Activated T-helper 1 cell treated with anti-CD3 and anti-CD28 coated beads, Interleukin-12 subunit alpha, Interleukin-12 subunit beta, Interleukin-2, Interleukin-4 antibody, amounts not matched to agents 30 ng/mL and 10 ng/mL and 1 ng/mL, durations not matched to agents 14 hours and 24 hours and 36 hours (primary cell): ENCODE measurements at regions of chr5 and their contacts with region 1.

Region 1: DNA sequence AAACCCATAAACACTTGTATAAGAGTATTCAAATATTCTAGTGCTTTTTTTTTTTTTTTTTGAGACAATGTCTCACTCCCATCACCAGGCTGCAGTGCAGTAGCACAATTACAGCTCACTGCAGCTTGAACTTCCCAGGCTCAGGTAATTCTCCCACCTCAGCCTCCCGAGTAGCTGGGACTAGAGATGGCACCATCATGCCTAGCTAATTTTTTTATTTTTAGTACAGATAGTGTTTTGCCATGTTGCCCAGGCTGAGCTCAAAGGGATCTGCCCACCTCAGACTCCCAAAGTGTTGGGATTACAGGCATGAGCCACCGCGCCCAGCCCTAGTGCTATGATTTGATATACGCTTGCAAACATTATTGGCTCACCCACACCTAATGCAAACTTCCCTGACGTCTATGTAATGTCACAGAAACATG is 11.8 kb downstream of the IL6ST start:
- DNase-seq: no peak
- H3K4me3 Mint-ChIP-seq: peak overlapping the region; percentile 56
- H3K27ac Mint-ChIP-seq: peak overlapping the region; percentile 51
- H3K4me1 Mint-ChIP-seq: peaks cover 81% of the 10 kb centered on the region
- H3K27me3 Mint-ChIP-seq: no peaks in the 10 kb centered on the region

Region 2: DNA sequence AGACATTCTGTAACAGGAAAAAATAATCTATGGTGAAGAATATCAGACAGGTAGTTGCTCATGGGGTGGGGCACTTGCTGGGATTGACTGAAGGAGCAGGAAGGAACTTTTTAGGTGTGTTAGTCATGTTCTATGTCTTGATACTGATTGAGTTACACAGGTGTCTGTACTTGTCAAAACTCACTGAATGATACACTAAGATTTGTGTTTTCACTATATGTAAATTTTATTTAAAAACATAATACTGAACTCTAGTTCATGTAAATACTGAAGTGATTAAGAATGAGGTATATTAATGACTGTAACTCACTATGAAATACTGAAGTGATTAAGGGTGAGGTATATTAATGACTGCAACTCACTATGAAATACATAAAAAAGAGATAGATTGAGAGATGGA is 16.7 kb before region 1 on chr5:
- intact Hi-C with region 1: no loop called
- DNase-seq: no peak
- H3K4me3 Mint-ChIP-seq: no peak overlapping the region
- H3K27ac Mint-ChIP-seq: peak overlapping the region; percentile 67
- H3K4me1 Mint-ChIP-seq: peaks cover 49% of the 10 kb centered on the region
- H3K27me3 Mint-ChIP-seq: no peaks in the 10 kb centered on the region

Region 3: GRCh38 chr5:56012281-56012963 is 29.5 kb after region 1 on chr5:
- intact Hi-C with region 1: loop called (anchors 1 kb)
- DNase-seq: peak; percentile 21
- H3K4me3 Mint-ChIP-seq: peak overlapping the region; percentile 0
- H3K27ac Mint-ChIP-seq: peak overlapping the region; percentile 12
- H3K4me1 Mint-ChIP-seq: peaks cover 32% of the 10 kb centered on the region
- H3K27me3 Mint-ChIP-seq: no peaks in the 10 kb centered on the region

Region 4: GRCh38 chr5:56026863-56027300 is 43.9 kb after region 1 on chr5:
- intact Hi-C with region 1: loop called (anchors 2 kb)
- DNase-seq: no peak
- H3K4me3 Mint-ChIP-seq: no peak overlapping the region
- H3K27ac Mint-ChIP-seq: no peak overlapping the region
- H3K4me1 Mint-ChIP-seq: peaks cover 23% of the 10 kb centered on the region
- H3K27me3 Mint-ChIP-seq: peaks cover 32% of the 10 kb centered on the region

Region 5: DNA sequence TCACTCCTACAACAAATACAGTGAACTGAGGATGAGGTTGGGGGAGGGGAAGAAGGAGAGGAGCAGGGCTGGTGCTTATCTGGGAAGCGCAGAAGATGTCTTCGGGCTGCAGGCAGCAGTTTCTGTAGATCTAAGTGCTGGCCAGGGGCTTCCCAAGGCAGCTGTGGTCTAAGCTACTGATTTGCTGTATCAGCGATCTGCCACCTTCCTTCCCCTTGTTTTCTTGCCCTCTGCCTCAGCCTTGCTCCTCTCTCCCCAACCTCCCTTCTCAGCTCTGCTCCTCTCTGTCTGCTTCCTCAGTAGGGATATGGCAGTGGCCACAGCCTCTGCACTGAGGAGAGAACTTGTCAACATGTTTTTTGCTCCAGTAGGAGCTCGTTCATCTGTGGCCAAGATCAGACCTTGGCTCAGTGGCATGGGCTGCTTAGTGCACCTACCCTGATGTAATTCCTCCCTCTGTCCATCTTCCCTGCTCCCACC is 54.6 kb after region 1 on chr5:
- intact Hi-C with region 1: no loop called
- DNase-seq: no peak
- H3K4me3 Mint-ChIP-seq: no peak overlapping the region
- H3K27ac Mint-ChIP-seq: no peak overlapping the region
- H3K4me1 Mint-ChIP-seq: peaks cover 8% of the 10 kb centered on the region
- H3K27me3 Mint-ChIP-seq: peaks cover 19% of the 10 kb centered on the region

Region 6: DNA sequence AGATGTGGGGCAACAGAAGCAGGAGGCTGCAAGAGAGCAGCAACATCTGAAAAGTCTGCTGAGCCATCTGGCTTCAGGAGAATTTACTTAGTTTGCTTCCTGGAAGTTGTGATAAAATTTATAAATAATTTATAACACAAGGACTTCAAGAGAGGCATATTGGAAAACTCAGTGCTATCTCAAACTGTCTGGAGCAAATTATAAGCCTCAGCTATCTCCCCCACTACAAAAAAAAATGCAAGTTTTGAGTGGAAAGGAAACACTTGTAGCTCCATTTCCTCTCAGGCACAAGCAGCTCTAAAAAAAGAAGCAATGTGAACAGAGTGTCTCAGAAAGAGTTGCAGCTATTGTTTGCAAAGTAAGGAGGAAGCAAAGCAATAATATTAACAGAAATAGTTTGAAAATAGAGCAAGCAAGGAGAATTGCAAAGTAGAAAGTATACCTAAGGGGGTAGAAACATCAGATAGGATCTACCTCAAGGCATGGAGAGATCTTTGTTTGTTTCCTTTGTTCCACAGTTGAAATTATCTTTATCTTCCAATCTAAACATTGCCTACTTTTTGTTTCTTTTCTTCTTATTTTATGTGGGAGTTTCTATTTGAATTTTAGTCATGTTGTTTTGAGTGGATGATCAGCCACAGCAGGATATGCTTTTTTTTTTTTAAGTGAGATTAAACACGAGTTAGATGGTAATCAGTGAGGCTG is 67.7 kb after region 1 on chr5:
- intact Hi-C with region 1: loop called (anchors 1 kb)
- DNase-seq: no peak
- H3K4me3 Mint-ChIP-seq: peak overlapping the region; percentile 40
- H3K27ac Mint-ChIP-seq: peak overlapping the region; percentile 54
- H3K4me1 Mint-ChIP-seq: peaks cover 32% of the 10 kb centered on the region
- H3K27me3 Mint-ChIP-seq: peaks cover 6% of the 10 kb centered on the region

Region 7: GRCh38 chr5:56095579-56096102 is 112.7 kb after region 1 on chr5:
- intact Hi-C with region 1: no loop called
- DNase-seq: no peak
- H3K4me3 Mint-ChIP-seq: peak overlapping the region; percentile 50
- H3K27ac Mint-ChIP-seq: peak overlapping the region; percentile 87
- H3K4me1 Mint-ChIP-seq: peaks cover 83% of the 10 kb centered on the region
- H3K27me3 Mint-ChIP-seq: no peaks in the 10 kb centered on the region

Region 8: DNA sequence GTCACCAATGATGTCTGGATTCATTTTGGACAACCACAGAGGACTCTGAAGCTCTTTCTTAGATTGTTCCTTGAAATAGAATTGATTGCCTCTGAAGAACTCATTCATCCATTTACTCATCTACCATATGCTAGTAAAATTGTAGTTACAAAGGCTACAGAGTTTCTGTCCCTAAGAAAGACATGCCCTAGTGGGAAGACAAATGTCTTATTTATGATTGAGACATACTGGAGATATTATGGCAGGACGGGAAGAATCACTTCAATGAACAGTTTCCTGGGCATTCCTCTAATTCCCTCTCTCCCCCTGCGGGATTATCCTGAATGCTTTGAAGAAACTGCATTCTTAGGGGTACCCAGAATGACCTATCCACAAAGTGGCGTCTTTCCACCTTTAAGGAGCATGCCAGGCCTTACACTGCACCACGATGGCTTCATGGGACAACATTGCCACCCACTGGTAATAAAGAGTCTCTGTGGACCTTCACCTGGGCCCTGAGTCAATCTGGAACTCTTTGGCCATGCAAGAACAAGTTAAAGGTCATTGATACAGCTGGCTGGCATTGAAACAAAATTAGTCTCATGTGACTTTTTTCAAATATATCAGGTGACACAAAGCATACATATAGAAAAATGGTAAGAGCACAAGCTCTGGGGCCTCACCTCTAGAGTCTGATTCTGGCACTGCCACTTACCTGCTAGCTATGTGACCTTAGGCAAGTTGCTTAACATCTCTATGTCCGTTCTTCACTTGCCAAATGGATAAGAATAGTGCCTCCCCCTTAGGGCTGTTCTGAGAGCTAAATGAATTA is 218.1 kb after region 1 on chr5:
- intact Hi-C with region 1: loop called (anchors 1 kb)
- DNase-seq: peak; percentile 48
- H3K4me3 Mint-ChIP-seq: no peak overlapping the region
- H3K27ac Mint-ChIP-seq: no peak overlapping the region
- H3K4me1 Mint-ChIP-seq: peaks cover 27% of the 10 kb centered on the region
- H3K27me3 Mint-ChIP-seq: no peaks in the 10 kb centered on the region

Region 9: GRCh38 chr5:56259002-56259511 is 276.1 kb after region 1 on chr5:
- intact Hi-C with region 1: loop called (anchors 1 kb)
- DNase-seq: no peak
- H3K4me3 Mint-ChIP-seq: no peak overlapping the region
- H3K27ac Mint-ChIP-seq: no peak overlapping the region
- H3K4me1 Mint-ChIP-seq: no peaks in the 10 kb centered on the region
- H3K27me3 Mint-ChIP-seq: peaks cover 14% of the 10 kb centered on the region

Region 10: GRCh38 chr5:56838409-56839039 is 855.6 kb after region 1 on chr5:
- intact Hi-C with region 1: loop called (anchors 5 kb)
- DNase-seq: no peak
- H3K4me3 Mint-ChIP-seq: peak overlapping the region; percentile 25
- H3K27ac Mint-ChIP-seq: no peak overlapping the region
- H3K4me1 Mint-ChIP-seq: peaks cover 58% of the 10 kb centered on the region
- H3K27me3 Mint-ChIP-seq: no peaks in the 10 kb centered on the region